Activated CD4-positive, alpha-beta memory T cell treated with anti-CD3 and anti-CD28 coated beads for 36 hours (primary cell): ENCODE measurements at regions of chr7 and their contacts with region 1.

Region 1: DNA sequence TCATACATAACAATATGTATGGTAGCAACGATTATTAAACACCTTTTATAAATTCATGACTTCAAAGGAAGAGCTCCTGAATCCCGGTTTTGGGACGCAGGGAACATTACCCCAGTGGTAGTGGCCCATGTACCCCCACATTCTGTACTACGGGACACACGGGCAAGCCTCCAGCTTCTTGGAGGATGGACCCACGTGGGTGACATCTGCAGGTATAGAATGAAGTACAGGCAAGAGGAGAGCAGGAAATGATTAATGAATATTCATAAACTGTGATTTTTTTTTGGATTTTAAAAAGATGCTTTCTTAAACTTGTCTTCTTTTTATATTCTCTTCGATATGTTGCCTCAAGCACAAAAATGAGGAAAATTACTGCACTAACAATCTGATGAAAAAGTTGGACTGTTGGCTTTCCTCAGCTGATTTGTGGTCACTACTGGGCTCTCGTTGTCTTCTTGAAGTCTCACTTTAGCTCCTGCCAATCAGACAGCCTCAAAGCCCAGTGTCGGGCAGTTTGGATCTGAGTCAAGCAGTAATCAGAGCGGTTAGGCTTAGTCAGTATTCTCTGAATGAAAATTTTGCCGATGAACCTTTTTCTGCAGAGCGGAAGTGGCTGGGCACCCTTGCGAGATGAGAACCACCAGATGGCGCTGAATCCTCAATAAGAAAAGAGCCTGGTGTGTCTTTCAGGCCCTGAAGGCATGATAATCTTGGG is 157.7 kb upstream of the CDCA7L start:
- DNase-seq: peak; percentile 87
- H3K4me3 Mint-ChIP-seq: no peak overlapping the region
- H3K27ac Mint-ChIP-seq: no peak overlapping the region
- H3K4me1 Mint-ChIP-seq: peaks cover 7% of the 10 kb centered on the region
- H3K27me3 Mint-ChIP-seq: peaks cover 11% of the 10 kb centered on the region

Region 2: DNA sequence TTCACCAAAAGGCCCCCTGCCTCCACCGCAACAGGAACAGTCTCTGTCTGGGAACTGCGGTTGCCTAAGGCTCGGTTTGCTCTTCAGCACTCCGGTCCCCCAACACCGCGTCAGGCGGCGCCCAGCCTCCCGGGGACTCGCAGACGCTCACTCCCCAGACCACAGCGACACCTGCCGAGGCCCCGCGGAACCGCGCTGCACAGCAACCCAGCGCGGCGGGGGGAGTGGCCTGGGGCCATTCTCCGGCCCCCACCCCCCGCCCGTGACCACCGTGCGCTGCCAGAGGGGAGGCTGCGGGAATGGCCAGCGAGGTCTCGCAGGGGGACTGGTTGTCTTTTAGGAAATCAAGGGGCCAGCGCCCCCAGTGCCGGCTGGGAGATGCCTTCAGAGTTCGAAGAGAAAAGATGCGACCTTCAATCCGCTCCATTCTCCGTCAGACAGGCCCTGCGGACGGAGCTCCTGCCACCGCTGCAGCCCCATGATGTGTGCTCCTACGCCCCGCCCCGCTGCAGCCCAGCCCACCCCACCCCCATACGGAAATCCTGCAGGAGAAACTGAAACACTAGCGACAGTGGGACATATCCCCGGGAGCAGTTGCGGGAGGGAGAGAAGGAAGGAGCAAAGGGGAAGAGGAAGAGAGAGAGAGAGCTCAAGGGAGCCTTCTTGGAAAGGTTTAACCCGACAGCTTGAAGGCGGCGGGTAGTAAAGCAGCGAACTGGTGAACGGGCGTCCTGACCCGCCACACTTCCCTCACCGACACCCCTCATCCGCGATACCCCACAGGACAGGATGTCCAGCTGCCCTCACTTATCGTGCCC is 20.3 kb before region 1 on chr7:
- CTCF ChIA-PET with region 1: interaction called, 28 read pairs
- POLR2A ChIA-PET with region 1: no interaction called
- intact Hi-C with region 1: loop called (anchors 1 kb)
- DNase-seq: peak; percentile 87
- H3K4me3 Mint-ChIP-seq: peak overlapping the region; percentile 67
- H3K27ac Mint-ChIP-seq: no peak overlapping the region
- H3K4me1 Mint-ChIP-seq: peaks cover 9% of the 10 kb centered on the region
- H3K27me3 Mint-ChIP-seq: peaks cover 37% of the 10 kb centered on the region

Region 3: GRCh38 chr7:22219036-22219435 is 115.6 kb after region 1 on chr7:
- CTCF ChIA-PET with region 1: no interaction called
- POLR2A ChIA-PET with region 1: no interaction called
- intact Hi-C with region 1: no loop called
- DNase-seq: no peak
- H3K4me3 Mint-ChIP-seq: no peak overlapping the region
- H3K27ac Mint-ChIP-seq: no peak overlapping the region
- H3K4me1 Mint-ChIP-seq: no peaks in the 10 kb centered on the region
- H3K27me3 Mint-ChIP-seq: peaks cover 16% of the 10 kb centered on the region

Region 4: DNA sequence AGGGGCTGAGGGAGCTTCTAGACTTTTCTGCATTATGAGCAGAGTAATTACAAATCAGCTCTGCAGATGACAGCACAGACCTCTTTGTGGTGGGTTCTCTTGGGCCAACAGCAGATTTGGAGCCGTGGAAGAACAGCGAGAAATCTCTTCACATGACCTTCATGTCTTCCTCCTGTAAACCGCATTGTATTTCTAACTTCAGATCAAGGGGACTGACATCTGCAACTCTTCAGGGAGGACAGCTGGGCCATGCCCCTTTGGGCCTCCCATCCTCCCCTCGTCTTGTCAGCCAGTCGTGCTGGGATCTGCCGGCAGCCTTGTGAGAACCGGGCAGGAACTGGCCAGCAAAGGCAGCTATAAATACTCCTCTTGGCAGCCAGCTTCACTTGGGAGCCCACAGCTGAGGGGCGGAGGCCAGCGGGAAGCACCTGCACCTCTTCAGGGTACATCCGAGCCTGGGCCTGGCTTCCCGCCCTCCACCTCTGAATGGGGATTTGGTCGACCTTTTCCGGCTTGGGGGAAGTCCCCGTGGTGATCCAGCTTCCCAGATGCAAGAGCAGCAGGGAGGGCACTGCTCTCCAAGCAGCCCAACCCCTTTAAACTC is 341.8 kb after region 1 on chr7:
- CTCF ChIA-PET with region 1: interaction called, 4 read pairs
- POLR2A ChIA-PET with region 1: no interaction called
- intact Hi-C with region 1: loop called (anchors 1 kb)
- DNase-seq: no peak
- H3K4me3 Mint-ChIP-seq: no peak overlapping the region
- H3K27ac Mint-ChIP-seq: no peak overlapping the region
- H3K4me1 Mint-ChIP-seq: peaks cover 11% of the 10 kb centered on the region
- H3K27me3 Mint-ChIP-seq: peaks cover 18% of the 10 kb centered on the region

Region 5: DNA sequence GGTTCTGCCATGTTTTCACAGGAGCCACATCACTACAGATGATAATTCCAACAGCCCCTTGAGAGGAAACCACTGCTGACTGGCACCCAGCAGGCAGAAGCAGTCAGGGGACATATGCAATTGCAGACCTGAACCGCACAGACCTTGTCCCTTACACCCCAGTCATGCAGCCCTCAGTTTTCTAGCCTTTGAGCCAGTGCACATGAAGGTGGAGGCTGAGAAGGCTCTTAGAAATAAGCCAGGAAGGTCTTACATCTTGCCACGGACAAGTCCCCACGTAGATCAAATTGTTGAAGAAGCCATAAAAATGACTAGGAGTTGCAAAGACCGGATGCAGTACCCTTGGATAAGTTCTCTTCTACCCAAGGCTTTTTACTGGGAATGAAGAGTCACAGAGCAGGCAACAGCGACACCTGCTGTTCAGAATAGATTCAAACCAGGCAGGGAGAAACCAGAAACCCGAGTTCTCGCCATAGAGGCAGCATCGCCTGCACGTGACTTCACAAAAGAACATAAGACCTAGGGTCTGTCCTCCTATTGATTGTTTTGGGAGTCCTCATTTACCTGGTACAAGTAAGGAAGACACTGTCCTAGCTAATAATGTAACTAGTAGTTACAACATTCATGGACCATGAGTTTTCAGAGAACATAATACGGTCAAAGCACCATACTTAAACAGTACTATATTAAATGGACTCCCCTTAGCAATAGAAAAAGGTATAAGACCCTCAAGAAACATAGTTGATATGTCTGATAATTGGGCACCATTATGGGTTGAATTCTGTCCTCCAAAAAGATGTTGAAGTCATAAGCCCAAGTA is 385.4 kb after region 1 on chr7:
- CTCF ChIA-PET with region 1: interaction called, 46 read pairs
- POLR2A ChIA-PET with region 1: no interaction called
- intact Hi-C with region 1: loop called (anchors 1 kb)
- DNase-seq: peak; percentile 70
- H3K4me3 Mint-ChIP-seq: no peak overlapping the region
- H3K27ac Mint-ChIP-seq: no peak overlapping the region
- H3K4me1 Mint-ChIP-seq: no peaks in the 10 kb centered on the region
- H3K27me3 Mint-ChIP-seq: peaks cover 9% of the 10 kb centered on the region

Region 6: DNA sequence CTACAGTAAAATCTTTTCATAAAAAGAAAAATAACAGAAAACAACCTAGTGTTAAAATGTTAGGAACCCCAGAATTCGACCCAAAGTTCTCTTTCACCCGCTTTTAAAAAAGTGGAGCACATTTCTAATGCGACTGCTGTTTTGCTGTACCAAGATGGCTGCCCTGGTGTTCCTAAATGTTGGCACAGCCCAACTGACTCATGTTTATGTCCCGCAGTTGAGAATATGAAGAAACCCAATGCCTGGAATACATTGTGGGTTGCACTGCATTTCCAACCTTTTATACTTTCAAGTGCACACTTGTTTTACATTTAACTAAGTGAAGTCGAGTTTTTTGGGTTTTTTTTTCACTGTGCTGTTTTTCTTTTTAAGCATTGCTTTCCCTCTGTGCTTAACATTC is 395.6 kb after region 1 on chr7:
- CTCF ChIA-PET with region 1: interaction called, 4 read pairs
- POLR2A ChIA-PET with region 1: no interaction called
- intact Hi-C with region 1: loop called (anchors 1 kb)
- DNase-seq: no peak
- H3K4me3 Mint-ChIP-seq: no peak overlapping the region
- H3K27ac Mint-ChIP-seq: no peak overlapping the region
- H3K4me1 Mint-ChIP-seq: peaks cover 3% of the 10 kb centered on the region
- H3K27me3 Mint-ChIP-seq: peaks cover 19% of the 10 kb centered on the region